Endothelial cell of umbilical vein (primary cell): ENCODE measurements at regions of chr1 and their contacts with region 1.

Region 1: DNA sequence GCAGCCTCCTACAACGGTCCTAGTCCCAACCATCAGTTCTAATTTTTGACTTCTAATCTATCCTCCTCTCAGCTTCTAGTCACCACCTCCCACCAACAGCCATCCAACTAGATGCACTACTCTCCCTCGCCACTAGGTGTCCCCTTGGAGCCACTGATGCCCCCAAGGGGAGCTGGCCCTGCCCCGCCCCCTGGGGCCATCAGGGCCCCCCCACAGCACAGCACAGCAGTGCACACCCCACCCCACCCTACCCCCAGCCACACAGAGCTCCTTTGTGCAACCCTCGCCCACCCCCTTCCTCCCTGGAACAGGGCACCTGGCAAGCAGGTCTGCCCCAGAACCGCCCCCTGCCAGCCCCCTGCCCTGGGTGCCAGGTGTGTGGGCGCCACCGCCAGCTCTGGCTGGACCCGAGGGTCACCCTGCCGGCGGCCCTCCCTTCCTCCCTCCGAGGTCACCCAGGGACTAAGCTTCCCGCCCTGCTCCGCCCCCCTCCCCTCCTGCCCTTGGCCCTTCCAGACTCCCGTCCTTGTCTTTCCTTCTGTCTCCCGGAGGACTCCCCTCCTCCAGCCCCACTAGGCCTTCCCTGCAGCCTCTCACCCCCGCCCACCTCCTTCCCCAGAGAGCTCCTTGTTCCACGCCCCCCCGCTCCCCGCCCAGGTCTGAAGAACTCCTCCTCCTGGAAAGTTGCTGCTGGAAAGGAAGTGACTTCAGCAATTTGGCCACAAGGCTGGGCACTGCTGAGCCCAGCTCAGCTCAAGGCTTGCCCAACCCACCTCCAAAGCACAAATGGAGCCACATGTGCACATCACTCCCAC is 47.0 kb downstream of the AHDC1 start:
- DNase-seq: peak; percentile 86
- H3K4me3 ChIP-seq: no peak overlapping the region
- H3K27ac ChIP-seq: no peak overlapping the region
- H3K4me1 ChIP-seq: peaks cover 10% of the 10 kb centered on the region
- H3K27me3 ChIP-seq: no peaks in the 10 kb centered on the region
- CTCF ChIP-seq: peak; percentile 67 to 92
- POLR2A ChIP-seq: no peak

Region 2: DNA sequence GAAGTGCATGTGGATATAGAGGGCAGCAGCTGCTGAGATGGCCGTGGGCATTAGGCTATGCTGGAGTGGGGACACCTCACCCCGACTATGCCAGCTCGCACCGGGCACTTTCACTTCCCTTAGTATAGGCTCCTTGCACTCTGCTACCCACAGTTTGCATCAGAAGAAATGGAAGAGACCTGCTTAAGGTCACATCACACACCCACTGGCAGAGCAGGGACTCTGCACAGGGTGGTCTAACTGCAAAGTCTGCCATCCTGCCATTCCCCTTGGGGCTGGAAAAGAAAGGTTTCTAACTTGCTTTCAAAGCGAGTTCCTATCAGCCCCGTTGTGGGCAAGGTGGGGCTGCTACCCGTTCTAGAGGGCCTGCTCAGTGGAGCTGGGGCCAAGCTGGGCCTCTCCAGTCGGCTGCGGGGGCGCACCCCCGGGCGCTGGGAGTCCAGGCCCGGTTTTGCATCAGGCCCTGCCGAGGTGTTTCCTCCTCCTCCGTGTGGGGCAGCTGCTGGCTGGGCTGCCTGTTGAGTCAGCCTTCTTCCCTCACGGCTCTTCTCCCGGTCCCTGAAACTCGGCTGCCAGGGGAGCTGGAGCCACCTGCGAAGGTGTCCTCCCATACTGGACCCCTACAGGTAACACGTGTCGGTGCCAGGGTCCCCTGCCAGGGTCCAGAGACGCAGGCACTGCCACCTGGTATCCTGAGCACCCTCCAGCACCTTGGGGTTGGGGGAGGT is 215.3 kb before region 1 on chr1 and contains the start of gene SYTL1:
- CTCF ChIA-PET with region 1: no interaction called
- POLR2A ChIA-PET with region 1: no interaction called
- dilution Hi-C with region 1: no loop called
- intact Hi-C with region 1: no loop called
- DNase-seq: no peak
- H3K4me3 ChIP-seq: no peak within 1 kb of the TSS
- H3K27ac ChIP-seq: no peak within 1 kb of the TSS
- H3K4me1 ChIP-seq: no peaks in the 10 kb centered on the region
- H3K27me3 ChIP-seq: no peaks in the 10 kb centered on the region
- CTCF ChIP-seq: no peak
- POLR2A ChIP-seq: no peak
- total RNA-seq, gene SYTL1: not detected in 2 replicates

Region 3: DNA sequence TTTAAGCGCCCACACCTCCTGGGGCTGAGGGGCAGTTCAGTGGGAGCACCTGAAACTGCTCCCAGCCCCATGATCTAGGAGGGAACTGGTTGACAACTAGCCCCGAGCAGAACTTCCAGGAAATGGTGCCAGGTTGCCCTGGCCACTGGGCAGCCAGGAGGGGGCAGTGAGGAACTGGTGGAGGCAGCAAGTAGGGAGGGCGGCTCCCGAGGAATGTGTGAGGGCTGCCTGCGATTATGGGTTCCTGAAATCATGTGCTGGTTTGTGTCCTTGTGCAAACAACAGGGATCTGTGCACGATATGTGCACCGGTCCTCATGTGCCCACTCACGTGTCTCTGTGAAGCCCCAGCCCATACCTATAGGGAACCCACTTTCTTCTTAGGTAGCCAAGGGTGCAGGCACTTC is 154.6 kb before region 1 on chr1:
- CTCF ChIA-PET with region 1: interaction called, 16 read pairs
- POLR2A ChIA-PET with region 1: no interaction called
- dilution Hi-C with region 1: no loop called
- intact Hi-C with region 1: no loop called
- DNase-seq: peak; percentile 74
- H3K4me3 ChIP-seq: no peak overlapping the region
- H3K27ac ChIP-seq: no peak overlapping the region
- H3K4me1 ChIP-seq: peaks cover 4% of the 10 kb centered on the region
- H3K27me3 ChIP-seq: no peaks in the 10 kb centered on the region
- CTCF ChIP-seq: peak; percentile 57 to 81
- POLR2A ChIP-seq: no peak

Region 4: DNA sequence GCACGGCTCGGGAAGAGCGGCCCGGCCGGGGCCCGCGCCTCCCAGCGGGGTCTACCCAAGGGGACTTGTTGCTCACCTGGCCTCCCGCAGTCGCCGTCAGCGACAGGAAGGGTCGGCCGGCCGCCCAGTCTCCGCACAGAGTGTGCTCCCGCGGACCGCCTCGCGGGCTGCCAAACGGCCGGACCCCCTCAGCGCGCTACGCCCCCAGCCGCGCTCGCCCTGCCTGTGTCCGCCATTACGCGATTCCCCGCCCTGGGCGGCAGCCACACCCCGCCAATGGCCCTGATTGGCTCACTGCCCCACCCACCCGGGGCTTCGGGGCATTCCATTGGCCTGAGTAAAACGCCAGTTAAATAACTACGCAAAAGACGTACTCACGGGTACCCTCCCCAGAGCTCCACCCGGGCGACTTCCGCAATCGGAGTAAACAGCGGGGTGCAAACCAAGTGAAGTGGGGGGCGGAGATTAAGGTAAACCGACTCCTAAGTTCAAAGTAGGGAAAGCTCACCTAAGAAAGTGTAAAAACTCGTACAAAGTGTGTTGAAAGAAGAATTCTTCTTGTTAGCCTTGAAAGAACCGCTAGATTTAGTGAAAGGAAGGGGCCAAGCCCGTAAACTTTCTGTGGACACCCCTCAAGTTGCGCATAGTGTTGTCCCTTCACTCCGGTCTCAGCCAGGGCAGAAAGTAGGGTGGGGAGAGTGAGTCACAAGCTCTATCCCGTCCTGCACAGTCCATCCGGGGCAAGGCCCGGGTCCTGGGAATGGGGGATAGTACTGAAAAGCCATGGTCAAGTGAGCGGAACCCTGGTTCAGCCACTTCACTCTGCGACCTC is 66.9 kb before region 1 on chr1 and contains the start of gene WASF2:
- CTCF ChIA-PET with region 1: interaction called, 10 read pairs
- POLR2A ChIA-PET with region 1: no interaction called
- dilution Hi-C with region 1: no loop called
- intact Hi-C with region 1: no loop called
- DNase-seq: peak; percentile 98
- H3K4me3 ChIP-seq: peak within 1 kb of the TSS; percentile 42 to 83 (median 80)
- H3K27ac ChIP-seq: peak within 1 kb of the TSS; percentile 95
- H3K4me1 ChIP-seq: peaks cover 14% of the 10 kb centered on the region
- H3K27me3 ChIP-seq: no peaks in the 10 kb centered on the region
- CTCF ChIP-seq: no peak
- POLR2A ChIP-seq: peak; percentile 74
- total RNA-seq, gene WASF2: 169 and 172 TPM in 2 replicates

Region 5: DNA sequence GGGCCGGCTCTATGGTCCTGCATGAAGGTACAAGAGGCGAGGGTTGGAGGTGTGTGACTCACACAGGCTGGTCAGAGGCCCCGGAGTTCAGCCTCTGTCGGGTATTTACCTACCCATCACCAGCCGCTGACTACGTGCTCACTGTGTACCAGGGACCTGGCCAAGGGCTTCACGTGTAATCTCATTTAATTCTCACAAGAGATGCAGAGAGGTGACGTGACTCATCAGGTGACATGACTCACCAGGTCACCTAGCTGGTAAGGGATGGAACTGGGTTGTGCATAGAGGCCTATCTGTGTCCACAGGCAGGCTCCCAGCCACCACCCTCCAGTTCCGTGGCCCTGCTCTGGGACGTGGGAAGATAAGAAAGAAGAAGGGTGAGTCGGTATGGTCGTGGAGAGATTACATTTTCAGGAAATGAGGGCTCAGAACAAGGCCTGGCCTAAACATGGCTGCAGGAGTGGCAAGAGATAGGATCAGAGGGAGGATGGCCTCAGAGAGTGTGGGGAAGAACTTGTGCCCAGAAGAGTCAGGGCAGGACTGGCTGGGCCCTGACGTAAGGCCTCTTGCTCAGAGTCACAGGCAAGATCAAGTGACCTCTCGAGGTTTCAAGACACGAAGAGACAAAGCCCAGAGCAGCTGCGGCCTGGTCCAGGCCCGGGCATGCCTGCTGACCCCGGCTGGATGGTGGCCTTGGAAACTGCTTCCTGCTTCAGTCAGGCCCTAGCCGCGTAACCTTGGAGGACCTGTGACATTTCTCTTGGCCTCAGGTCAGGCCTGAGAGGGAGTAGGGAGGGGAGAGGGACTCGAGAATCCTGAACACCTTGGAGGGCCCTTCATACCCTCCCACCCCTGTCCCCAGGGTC is 14.3 kb before region 1 on chr1:
- CTCF ChIA-PET with region 1: interaction called, 33 read pairs
- POLR2A ChIA-PET with region 1: no interaction called
- dilution Hi-C with region 1: no loop called
- intact Hi-C with region 1: no loop called
- DNase-seq: peak; percentile 17
- H3K4me3 ChIP-seq: no peak overlapping the region
- H3K27ac ChIP-seq: no peak overlapping the region
- H3K4me1 ChIP-seq: peaks cover 9% of the 10 kb centered on the region
- H3K27me3 ChIP-seq: no peaks in the 10 kb centered on the region
- CTCF ChIP-seq: no peak
- POLR2A ChIP-seq: no peak

Region 6: GRCh38 chr1:27581823-27582243 is 24.8 kb after region 1 on chr1:
- CTCF ChIA-PET with region 1: interaction called, 60 read pairs
- POLR2A ChIA-PET with region 1: no interaction called
- dilution Hi-C with region 1: no loop called
- intact Hi-C with region 1: no loop called
- DNase-seq: no peak
- H3K4me3 ChIP-seq: no peak overlapping the region
- H3K27ac ChIP-seq: no peak overlapping the region
- H3K4me1 ChIP-seq: peaks cover 5% of the 10 kb centered on the region
- H3K27me3 ChIP-seq: no peaks in the 10 kb centered on the region
- CTCF ChIP-seq: no peak
- POLR2A ChIP-seq: no peak

Region 7: GRCh38 chr1:27662707-27663393 is 105.9 kb after region 1 on chr1:
- CTCF ChIA-PET with region 1: interaction called, 36 read pairs
- POLR2A ChIA-PET with region 1: no interaction called
- dilution Hi-C with region 1: no loop called
- intact Hi-C with region 1: loop called (anchors 1 kb)
- DNase-seq: peak; percentile 83
- H3K4me3 ChIP-seq: no peak overlapping the region
- H3K27ac ChIP-seq: no peak overlapping the region
- H3K4me1 ChIP-seq: peaks cover 14% of the 10 kb centered on the region
- H3K27me3 ChIP-seq: no peaks in the 10 kb centered on the region
- CTCF ChIP-seq: peak; percentile 80 to 85
- POLR2A ChIP-seq: no peak

Region 8: DNA sequence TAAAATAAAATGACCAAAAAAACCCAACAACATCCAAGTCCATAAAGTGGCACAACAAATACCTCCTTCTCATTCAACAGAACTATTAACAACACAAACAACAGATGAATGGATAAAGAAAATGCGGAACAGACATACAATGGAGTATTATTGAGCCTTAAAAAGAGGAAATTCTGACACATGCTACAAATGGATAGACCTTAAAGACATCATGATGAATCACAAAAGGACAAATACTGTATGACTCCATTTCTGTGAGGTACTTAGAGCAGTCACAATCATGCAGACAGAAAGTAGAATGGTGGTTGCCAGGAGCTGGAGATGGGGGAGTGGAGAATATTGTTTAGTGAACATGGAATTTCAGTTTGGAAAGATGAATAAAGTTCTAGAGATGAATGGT is 488.8 kb after region 1 on chr1:
- CTCF ChIA-PET with region 1: no interaction called
- POLR2A ChIA-PET with region 1: no interaction called
- dilution Hi-C with region 1: no loop called
- intact Hi-C with region 1: no loop called
- DNase-seq: peak; percentile 69
- H3K4me3 ChIP-seq: no peak overlapping the region
- H3K27ac ChIP-seq: peak overlapping the region; percentile 60
- H3K4me1 ChIP-seq: peaks cover 19% of the 10 kb centered on the region
- H3K27me3 ChIP-seq: no peaks in the 10 kb centered on the region
- CTCF ChIP-seq: no peak
- POLR2A ChIP-seq: no peak